Tibial artery (tissue), 4 donors: ENCODE measurements at regions of chr5 and their contacts with region 1.

Region 1: DNA sequence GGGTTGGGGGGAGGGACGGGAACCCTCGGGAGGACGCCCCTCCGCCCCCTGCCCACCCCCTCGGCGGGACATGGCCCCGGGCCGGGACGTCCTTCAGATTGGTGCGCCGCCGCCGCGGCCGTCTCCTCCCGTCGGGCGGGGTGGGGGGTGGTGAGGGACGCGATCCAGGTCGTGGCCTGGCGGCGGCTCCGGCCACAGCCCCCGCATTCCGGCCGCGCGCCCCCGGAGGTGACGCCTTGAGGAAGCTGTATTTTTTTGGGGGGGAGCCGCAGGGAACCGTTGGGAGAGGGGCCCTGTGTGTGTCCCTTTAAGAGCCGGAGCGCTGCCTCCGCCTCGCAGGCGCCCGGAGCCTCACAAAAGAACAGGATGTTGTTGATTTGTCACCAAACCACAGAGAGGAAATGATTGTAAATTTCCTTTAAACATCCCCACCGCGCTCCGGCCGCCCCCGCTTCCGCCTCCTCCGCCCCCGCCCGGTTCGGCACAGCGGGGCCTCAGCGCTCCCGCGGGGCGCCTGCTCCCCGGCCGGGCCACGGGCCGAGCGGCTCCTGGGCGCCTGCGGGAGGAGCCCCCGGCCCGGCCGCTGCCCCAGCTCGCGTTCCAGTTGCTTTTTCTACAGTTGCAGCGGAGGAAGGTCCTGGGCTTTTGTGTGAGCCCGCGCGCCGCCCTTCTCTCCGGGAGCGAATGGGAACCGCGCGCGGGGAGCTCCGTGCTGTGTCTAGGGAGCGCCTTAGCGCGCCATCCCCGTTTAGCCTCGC is 32.1 kb upstream of the SPRY4 start:
- DNase-seq: peak; percentile 89 to 91
- H3K4me3 ChIP-seq: peak overlapping the region; percentile 59 to 79
- H3K27ac ChIP-seq: peak overlapping the region; percentile 90 to 97
- H3K4me1 ChIP-seq: peaks cover 6 to 9% (median 8%) of the 10 kb centered on the region in 4 donors
- H3K27me3 ChIP-seq: no peaks in the 10 kb centered on the region
- CTCF ChIP-seq: no peak

Region 2: DNA sequence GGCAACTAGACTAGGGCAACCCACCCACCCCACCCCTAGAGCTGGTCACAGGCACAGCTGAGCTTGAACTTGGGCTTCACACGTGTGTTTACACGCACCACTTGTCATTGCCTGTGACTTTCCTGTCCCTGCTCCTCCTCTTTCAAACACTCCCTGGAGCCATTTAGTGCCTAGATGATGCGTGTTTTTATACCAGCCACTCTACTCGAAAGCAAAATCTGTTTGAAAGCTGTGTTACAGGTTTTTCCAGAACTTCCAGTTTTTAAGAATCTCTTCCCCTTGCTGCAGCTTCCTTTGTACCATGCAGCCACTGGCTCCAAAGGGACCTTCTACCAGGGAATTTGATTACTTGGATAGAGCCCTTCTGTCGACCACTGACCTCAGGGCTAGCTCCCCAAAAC is 46.7 kb after region 1 on chr5:
- intact Hi-C with region 1: loop called (anchors 5 kb)
- DNase-seq: no peak
- H3K4me3 ChIP-seq: no peak overlapping the region
- H3K27ac ChIP-seq: peak overlapping the region; percentile 80 to 84
- H3K4me1 ChIP-seq: peaks cover 2 to 42% (median 16%) of the 10 kb centered on the region in 4 donors
- H3K27me3 ChIP-seq: no peaks in the 10 kb centered on the region
- CTCF ChIP-seq: no peak